ENCODE measurements at regions of chr17 and their contacts with region 1.

Region 1: DNA sequence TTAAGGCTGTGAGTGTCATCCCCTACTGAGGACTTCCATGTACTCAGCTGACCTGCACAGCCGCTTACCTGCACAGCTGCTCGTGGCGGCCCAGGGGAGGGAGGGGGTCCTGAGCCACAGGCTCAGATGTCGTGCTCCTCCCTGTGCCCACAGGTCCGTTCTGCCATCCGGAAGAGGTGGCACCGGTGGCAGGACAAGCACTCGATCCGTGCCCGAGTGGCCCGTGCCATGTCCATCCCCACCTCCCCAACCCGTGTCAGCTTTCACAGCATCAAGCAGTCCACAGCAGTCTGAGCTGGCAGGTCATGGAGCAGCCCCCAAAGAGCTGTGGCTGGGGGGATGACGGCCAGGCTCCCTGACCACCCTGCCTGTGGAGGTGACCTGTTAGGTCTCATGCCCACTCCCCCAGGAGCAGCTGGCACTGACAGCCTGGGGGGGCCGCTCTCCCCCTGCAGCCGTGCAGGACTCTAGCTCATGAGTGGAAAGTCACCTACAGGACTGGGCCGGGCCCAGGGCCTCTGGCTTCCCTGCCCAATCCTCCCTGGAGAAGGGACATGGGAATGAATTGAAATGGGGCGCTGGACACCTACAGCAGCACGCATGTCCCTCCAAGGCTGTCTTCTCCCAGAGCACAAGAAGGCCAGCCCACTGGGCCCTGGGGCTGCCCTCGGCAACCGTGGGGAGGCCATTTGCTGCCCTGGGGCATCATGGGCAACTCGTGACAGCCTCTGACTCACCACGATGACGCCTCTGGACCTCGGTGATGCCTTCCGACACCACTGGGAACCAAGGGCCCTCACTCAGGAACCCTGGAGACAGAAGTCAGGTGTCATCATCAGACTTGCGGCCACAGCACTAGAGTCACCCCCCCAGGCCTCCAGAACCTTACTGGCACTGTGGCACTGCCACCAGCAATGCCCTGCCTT is 9.9 kb upstream of the SPPL2C start:
- DNase-seq: no peak
- H3K4me3 ChIP-seq: no peak overlapping the region
- H3K27ac ChIP-seq: no peak overlapping the region
- H3K4me1 ChIP-seq: no peaks in the 10 kb centered on the region
- H3K27me3 ChIP-seq: no peaks in the 10 kb centered on the region
- CTCF ChIP-seq: no peak

Region 2: DNA sequence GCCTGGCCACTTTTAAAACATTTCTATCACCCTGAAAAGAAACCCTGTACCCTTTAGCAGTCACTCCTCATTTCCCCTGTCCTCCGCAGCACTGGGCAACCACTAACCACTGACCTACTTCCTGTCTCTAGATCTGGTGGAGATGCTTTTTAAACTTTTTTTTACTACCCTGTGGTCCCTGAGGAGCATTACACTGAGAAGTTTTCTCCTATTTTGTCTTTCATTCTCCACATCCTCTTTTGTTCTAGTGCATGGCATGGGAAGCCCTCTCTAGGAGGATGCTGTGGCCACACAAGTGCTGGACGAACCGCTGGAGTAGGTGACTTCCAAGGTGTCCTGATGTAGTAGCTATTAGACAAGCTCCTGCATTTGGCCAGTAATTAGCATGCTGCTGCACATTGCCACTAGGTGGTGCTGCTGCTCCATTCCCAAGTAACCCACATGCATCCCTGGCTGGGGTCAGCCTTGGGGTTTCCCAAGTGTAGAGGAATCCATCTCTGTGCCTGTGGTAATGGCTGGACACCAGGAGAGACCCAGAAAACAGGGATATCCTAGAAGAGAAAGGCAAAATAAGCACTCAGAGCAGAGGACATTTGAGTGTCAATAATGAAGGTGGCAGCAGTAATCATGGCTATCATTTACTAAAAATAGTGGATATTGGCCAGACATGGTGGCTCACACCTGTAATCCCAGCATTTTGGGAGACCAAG is 194.4 kb before region 1 on chr17:
- intact Hi-C with region 1: loop called (anchors 5 kb)
- DNase-seq: peak in 4 of 5 donors; percentile 83 to 89 (median 87)
- H3K4me3 ChIP-seq: no peak overlapping the region
- H3K27ac ChIP-seq: no peak overlapping the region
- H3K4me1 ChIP-seq: no peaks in the 10 kb centered on the region
- H3K27me3 ChIP-seq: no peaks in the 10 kb centered on the region
- CTCF ChIP-seq: peak; percentile 98

Region 3: DNA sequence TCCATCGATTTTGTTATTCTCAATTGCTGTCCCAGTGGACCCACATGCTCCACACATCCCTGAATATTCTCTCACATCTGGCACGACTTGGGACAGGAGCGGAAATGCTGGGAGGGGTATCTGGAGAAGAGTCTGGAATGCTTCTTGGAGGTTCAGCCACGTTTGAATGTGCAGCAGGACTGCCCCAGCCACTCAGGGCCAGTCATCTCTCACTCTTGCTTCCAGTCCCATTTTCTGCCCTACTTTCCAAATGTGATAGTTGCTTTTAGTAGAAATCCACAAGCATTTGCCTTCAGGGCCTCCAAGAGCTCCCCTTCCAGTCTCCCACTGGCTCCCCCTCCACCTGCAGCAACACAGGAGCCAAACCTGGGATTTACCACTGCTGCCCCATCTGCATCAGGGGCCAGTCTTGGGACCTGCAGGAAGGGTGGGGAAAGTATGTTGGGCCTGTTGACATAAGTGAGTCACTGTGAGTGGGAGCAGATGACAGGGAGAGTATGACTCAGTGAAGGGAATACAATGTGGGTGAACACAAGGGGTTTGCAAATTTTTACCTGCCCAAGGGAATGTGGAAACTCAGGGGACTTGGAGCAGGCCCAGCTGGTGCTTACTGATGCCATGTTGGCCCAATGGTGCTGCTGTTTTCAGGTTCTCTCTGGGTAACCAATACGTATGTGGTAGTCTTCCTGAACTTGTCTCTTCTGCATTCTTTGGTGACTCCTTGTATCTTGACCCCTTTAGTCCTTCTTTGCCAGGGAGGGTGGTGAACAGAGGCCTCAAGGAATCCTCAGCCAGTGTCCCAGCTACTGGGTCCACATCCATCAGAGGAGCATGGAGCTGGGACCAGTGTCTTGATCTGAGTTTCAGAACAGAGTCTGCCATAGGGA is 129.4 kb before region 1 on chr17:
- intact Hi-C with region 1: no loop called
- DNase-seq: no peak
- H3K4me3 ChIP-seq: no peak overlapping the region
- H3K27ac ChIP-seq: no peak overlapping the region
- H3K4me1 ChIP-seq: no peaks in the 10 kb centered on the region
- H3K27me3 ChIP-seq: no peaks in the 10 kb centered on the region
- CTCF ChIP-seq: no peak

Measured in kidney (tissue), 22 donors.